Testis (tissue), 5 donors: ENCODE measurements at regions of chr15 and their contacts with region 1.

Region 1: GRCh38 chr15:32844118-32844711 is 126.4 kb downstream of the GREM1 start:
- DNase-seq: no peak
- H3K4me3 ChIP-seq: no peak overlapping the region
- H3K27ac ChIP-seq: no peak overlapping the region
- H3K4me1 ChIP-seq: no peaks in the 10 kb centered on the region
- H3K27me3 ChIP-seq: no peaks in the 10 kb centered on the region
- CTCF ChIP-seq: peak in 2 of 3 experiments; percentile 59 to 62
- POLR2A ChIP-seq: no peak

Region 2: GRCh38 chr15:32936283-32936918 is 92.2 kb after region 1 on chr15:
- intact Hi-C with region 1: loop called (anchors 10 kb)
- DNase-seq: no peak
- H3K4me3 ChIP-seq: no peak overlapping the region
- H3K27ac ChIP-seq: no peak overlapping the region
- H3K4me1 ChIP-seq: no peaks in the 10 kb centered on the region
- H3K27me3 ChIP-seq: no peaks in the 10 kb centered on the region
- CTCF ChIP-seq: peak; percentile 51 to 76 (median 59)
- POLR2A ChIP-seq: no peak